ENCODE measurements at regions of chr15 and their contacts with region 1.

Region 1: GRCh38 chr15:80455668-80456442 is 51.7 kb downstream of the ARNT2 start:
- H3K4me3 ChIP-seq: no peak overlapping the region
- H3K27ac ChIP-seq: no peak overlapping the region
- H3K4me1 ChIP-seq: no peaks in the 10 kb centered on the region
- CTCF ChIP-seq: peak; percentile 75

Region 2: GRCh38 chr15:80445300-80446041 is 10.4 kb before region 1 on chr15:
- CTCF ChIA-PET with region 1: interaction called, 15 read pairs
- POLR2A ChIA-PET with region 1: no interaction called
- H3K4me3 ChIP-seq: no peak overlapping the region
- H3K27ac ChIP-seq: no peak overlapping the region
- H3K4me1 ChIP-seq: no peaks in the 10 kb centered on the region
- CTCF ChIP-seq: no peak

Region 3: DNA sequence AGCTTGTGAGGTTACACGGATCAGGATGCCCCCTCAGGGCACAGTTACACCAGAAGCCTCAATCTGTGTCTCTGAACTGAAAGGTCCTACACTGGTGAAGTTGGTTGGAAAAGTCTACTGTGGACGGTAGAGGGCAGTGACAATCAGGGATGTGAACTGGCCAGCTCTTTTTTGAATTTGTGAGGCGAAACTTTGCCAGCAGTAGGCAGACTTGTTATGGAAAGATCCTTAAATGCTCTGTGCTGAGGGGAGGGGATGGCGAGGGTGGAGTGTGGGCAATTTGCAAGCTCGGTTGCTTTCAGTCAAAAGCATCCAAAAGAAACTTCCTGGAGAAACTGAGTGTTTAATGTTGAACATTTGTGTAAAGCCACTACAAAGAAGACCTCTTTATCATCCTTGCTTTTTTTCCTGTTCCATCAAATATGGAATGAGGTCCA is 111.9 kb after region 1 on chr15:
- CTCF ChIA-PET with region 1: interaction called, 28 read pairs
- POLR2A ChIA-PET with region 1: no interaction called
- H3K4me3 ChIP-seq: no peak overlapping the region
- H3K27ac ChIP-seq: no peak overlapping the region
- H3K4me1 ChIP-seq: 0 out of 2 replicates have a peak, but pooled peaks cover 4% of the 10 kb centered on the region
- CTCF ChIP-seq: peak; percentile 83; the same call in 1 of the 2 replicates

Region 4: DNA sequence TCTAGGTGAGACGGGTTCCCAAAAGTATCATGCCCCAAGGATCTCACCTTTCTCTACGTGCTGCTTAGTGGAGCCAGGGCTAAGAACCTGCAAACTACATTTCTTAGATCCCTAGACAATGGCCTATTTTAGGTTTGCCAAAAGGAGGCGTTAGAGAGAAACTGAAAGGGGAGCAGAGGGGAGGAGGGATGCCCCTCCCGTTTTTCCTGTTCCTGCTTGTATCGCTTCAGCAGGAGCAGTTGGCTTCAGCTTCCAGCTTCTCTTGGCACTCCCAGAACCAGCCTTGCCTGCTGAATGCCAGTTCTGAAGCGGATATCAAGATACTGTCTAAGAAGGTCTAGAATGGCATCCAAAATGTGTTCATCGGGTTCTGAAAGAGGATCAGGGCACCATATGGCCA is 180.8 kb after region 1 on chr15:
- CTCF ChIA-PET with region 1: no interaction called
- POLR2A ChIA-PET with region 1: no interaction called
- H3K4me3 ChIP-seq: no peak overlapping the region
- H3K27ac ChIP-seq: no peak overlapping the region
- H3K4me1 ChIP-seq: peaks cover 3% of the 10 kb centered on the region; the same call in 1 of the 2 replicates
- CTCF ChIP-seq: no peak

Region 5: GRCh38 chr15:80970018-80970658 is 514.3 kb after region 1 on chr15:
- CTCF ChIA-PET with region 1: interaction called, 49 read pairs
- POLR2A ChIA-PET with region 1: no interaction called
- H3K4me3 ChIP-seq: no peak overlapping the region
- H3K27ac ChIP-seq: no peak overlapping the region
- H3K4me1 ChIP-seq: no peaks in the 10 kb centered on the region
- CTCF ChIP-seq: peak; percentile 42; the same call in 1 of the 2 replicates